Dorsolateral prefrontal cortex (tissue), 120 donors: ENCODE measurements at regions of chr17 and their contacts with region 1.

Region 1: DNA sequence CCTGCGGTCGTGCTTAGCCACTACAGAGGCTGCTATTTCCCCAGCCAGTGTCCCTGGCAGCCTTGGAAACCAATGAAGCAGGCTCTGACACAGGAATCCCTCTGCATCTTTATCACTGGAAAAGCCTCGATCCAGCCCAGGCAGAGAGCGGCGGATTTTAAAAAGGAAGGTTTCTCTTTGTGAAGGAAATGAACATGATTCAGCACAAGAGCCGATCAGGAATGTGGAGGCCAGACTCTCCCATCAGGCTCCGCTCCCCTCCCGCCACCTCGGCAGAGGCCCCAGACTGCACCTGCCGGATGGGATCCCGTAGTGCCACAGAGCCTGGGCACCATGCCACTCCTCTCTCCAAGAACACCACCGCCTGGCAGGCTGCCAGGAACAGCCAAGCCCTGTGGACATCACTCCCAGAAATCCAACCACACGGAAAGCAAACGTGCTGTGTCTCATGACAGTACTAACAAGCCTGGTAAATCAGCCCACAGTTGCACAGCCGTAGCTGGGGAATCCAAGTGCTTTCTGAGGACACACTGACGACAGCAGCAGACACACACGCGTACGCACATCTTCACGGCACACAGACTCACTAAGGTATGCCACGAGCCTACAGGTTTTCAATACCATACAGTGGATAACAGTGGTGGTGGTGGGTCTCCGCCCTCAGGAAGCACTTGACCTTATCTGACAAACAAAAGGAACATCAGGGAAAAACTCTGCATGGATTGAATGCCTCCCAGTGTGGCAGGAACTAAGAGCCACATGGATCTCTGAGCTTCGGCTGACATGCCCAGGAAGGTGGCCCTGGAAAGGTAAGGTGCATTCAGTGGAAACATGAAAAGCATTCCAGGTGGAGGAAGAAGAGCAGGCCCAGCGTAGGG is 5.4 kb downstream of the LRRC75A start:
- DNase-seq: peak; percentile 62 to 99 (median 82)
- H3K4me3 ChIP-seq: peak overlapping the region in 49 of 59 donors; percentile 0 to 52 (median 33)
- H3K27ac ChIP-seq: peak overlapping the region in 56 of 59 donors; percentile 3 to 88 (median 67)
- H3K27me3 ChIP-seq: no peaks in the 10 kb centered on the region
- CTCF ChIP-seq: no peak

Region 2: DNA sequence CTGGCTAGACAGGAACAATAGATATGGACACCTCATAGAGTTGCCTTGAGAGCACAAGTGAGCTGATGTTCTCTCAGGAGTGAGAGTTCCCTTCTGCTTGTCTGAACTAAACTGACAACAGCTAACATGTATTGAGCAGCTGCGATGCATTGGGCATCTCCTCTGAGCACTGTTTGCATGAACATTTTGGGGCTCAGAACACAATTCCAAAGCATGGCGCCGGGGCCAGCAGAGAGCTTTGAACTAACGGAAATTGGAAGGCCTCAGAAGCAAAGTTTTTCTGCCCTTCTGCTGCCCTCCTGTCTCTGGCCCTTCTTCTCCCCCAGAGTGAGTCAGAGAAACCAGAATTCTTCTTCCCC is 33.1 kb before region 1 on chr17:
- intact Hi-C with region 1: loop called in 1 of 2 experiments (anchors 1 kb)
- DNase-seq: no peak
- H3K4me3 ChIP-seq: no peak overlapping the region
- H3K27ac ChIP-seq: peak overlapping the region in 9 of 59 donors; percentile 5 to 59 (median 14)
- H3K27me3 ChIP-seq: no peaks in the 10 kb centered on the region
- CTCF ChIP-seq: peak in 5 of 56 donors; percentile 0 to 10 (median 3)